Activated T-helper 2 cell treated with anti-CD3 and anti-CD28 coated beads, Interferon-gamma antibody, Interleukin-2, Interleukin-4, amounts not matched to agents 10 μg/mL and 5 μg/mL and 100 μg/mL, durations not matched to agents 14 hours and 24 hours and 36 hours (primary cell): ENCODE measurements at regions of chr11 and their contacts with region 1.

Region 1: DNA sequence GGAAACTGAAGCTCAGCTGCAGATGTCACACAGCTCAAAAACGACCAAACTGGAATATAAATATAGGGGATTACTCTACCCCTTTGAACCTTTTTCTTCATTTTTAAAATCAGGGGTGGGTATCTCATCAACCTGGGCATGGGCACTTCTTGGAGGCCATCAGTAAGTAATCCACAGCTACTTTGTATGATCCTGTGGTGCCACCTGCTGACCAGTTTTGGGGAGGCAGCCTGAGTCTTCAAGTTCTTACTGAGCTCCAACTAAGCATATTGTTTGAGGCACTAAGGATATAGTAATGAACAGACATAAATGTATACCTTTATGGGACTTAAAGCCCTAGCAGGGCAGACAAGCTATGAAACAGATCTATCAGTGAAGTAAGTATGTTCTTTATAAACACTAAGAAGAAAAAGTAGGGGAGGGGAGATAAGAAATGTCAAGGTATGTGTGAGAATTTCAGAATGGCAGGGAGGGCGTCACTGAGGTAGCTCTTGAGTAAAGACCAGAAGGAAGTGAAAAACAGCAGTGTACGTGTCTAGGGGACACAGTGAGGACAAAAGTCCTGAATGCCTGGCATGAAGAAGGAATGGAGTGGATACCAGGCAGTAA is 18.4 kb downstream of the TUB start:
- DNase-seq: peak; percentile 47
- H3K4me3 Mint-ChIP-seq: no peak overlapping the region
- H3K27ac Mint-ChIP-seq: no peak overlapping the region
- H3K4me1 Mint-ChIP-seq: no peaks in the 10 kb centered on the region
- H3K27me3 Mint-ChIP-seq: no peaks in the 10 kb centered on the region

Region 2: DNA sequence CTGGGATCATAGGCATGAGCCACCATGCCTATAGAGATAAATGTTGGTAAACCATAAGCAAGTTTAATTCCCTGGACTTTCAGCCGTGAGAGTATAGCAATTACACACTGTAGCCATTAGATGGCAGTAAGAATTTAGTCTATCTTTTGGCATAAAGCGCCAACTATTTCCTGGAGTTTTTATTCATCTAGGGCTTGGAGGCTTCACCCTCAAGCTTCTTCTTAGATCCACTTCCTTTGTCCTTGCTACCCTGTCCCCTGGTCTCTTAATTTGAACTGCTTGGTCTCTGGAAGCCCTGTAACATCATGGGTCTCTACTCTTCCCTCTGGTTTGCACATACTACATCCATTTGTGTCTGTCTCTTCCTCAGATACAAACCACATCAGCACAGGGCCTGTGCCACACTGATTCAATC is 206.5 kb before region 1 on chr11:
- intact Hi-C with region 1: loop called (anchors 1 kb)
- DNase-seq: no peak
- H3K4me3 Mint-ChIP-seq: no peak overlapping the region
- H3K27ac Mint-ChIP-seq: no peak overlapping the region
- H3K4me1 Mint-ChIP-seq: peaks cover 4% of the 10 kb centered on the region
- H3K27me3 Mint-ChIP-seq: peaks cover 7% of the 10 kb centered on the region

Region 3: DNA sequence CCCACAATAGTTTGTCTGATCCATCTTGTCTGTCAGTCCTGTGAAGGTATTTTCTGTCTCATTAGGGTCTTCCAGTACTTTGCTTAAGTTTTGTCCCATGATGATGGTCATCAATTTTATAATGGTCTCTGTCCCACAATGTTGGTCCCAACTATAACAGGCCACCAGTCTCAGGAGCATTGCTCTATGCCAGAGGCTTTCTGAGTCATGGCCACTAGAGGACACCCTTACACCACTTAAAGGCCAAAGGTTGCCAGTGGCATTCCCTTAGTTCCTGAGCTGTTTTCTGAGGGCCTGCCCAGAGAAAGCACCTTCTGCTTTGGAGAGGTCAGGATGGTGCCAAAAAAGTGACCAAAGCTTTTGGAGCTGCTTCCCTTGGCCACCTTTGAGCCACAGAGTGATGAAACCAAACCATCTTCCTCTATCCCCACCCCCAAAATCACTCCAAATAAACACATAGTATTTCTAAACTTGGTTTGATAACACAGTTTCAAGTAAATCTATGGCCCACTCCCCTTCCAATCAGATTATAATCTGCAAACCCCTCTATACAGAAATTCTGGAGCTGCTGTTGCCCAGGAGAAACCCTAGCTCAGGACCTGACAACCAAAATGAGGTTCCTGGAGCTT is 92.9 kb before region 1 on chr11:
- intact Hi-C with region 1: loop called (anchors 1 kb)
- DNase-seq: no peak
- H3K4me3 Mint-ChIP-seq: no peak overlapping the region
- H3K27ac Mint-ChIP-seq: no peak overlapping the region
- H3K4me1 Mint-ChIP-seq: no peaks in the 10 kb centered on the region
- H3K27me3 Mint-ChIP-seq: no peaks in the 10 kb centered on the region

Region 4: DNA sequence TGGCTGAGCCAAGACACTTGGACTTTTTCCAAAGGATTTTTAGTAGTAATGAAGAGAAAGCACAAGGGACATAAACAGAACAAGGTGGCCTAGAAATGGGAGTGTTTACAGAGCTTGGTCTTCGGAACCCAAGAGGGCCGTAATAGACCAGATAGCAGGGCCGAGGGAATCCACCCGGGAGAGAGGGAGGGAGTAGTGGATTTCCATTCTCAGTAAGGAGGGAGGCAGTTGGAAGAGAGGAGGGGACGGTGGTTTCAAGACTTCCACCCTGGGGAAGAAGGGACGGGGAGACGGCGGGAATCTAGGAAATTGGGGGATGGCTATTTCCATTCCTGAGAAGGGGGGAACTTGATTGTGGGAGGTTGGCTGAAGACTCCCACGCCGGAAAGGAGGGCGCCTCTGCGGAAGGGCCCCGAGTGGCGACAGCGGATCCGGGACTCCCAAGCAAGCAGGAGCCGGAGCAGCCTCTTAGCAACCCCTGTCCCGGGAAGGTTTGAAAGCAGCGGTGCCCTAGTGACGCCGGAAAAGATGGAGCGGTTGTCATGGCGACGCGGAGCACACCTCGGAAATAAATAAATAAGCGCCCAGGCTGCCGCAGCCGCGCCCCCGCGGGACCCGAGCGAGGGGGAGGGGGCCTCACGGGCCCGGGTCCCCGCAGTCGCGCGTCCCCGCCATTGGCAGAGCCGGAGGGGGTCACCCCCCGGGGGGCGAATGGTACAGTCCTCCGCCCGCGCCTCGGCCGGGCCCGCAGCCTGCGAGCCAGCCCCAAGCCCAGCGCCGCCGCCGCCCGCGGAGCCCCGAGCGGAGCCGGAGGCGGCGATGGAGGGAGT is 80.7 kb before region 1 on chr11:
- intact Hi-C with region 1: no loop called
- DNase-seq: peak; percentile 68
- H3K4me3 Mint-ChIP-seq: peak overlapping the region; percentile 74
- H3K27ac Mint-ChIP-seq: no peak overlapping the region
- H3K4me1 Mint-ChIP-seq: peaks cover 11% of the 10 kb centered on the region
- H3K27me3 Mint-ChIP-seq: peaks cover 53% of the 10 kb centered on the region

Region 5: GRCh38 chr11:8033305-8034105 is 65.9 kb before region 1 on chr11:
- intact Hi-C with region 1: loop called (anchors 1 kb)
- DNase-seq: peak; percentile 27
- H3K4me3 Mint-ChIP-seq: no peak overlapping the region
- H3K27ac Mint-ChIP-seq: no peak overlapping the region
- H3K4me1 Mint-ChIP-seq: peaks cover 5% of the 10 kb centered on the region
- H3K27me3 Mint-ChIP-seq: peaks cover 6% of the 10 kb centered on the region

Region 6: DNA sequence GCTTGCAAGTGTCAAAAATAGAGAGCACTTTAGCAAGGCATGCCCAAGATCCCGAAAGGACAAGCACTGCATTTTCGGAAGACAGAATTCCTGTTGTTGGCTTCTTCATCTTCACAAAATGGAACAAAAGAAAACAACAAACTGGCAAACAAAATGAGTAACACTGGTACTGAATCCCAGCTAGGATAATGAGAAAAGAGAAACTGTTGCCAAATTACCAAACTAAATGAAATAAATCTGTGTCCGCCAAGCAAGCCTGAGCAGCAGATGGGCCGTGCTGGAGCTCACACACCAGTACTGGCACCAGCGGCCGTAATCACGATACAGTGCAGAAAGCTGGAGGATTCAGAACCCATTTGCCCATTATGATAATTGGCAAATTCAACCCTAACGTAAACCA is 12.2 kb after region 1 on chr11:
- intact Hi-C with region 1: no loop called
- DNase-seq: no peak
- H3K4me3 Mint-ChIP-seq: no peak overlapping the region
- H3K27ac Mint-ChIP-seq: no peak overlapping the region
- H3K4me1 Mint-ChIP-seq: no peaks in the 10 kb centered on the region
- H3K27me3 Mint-ChIP-seq: no peaks in the 10 kb centered on the region